ENCODE measurements at regions of chr2 and their contacts with region 1.

Region 1: DNA sequence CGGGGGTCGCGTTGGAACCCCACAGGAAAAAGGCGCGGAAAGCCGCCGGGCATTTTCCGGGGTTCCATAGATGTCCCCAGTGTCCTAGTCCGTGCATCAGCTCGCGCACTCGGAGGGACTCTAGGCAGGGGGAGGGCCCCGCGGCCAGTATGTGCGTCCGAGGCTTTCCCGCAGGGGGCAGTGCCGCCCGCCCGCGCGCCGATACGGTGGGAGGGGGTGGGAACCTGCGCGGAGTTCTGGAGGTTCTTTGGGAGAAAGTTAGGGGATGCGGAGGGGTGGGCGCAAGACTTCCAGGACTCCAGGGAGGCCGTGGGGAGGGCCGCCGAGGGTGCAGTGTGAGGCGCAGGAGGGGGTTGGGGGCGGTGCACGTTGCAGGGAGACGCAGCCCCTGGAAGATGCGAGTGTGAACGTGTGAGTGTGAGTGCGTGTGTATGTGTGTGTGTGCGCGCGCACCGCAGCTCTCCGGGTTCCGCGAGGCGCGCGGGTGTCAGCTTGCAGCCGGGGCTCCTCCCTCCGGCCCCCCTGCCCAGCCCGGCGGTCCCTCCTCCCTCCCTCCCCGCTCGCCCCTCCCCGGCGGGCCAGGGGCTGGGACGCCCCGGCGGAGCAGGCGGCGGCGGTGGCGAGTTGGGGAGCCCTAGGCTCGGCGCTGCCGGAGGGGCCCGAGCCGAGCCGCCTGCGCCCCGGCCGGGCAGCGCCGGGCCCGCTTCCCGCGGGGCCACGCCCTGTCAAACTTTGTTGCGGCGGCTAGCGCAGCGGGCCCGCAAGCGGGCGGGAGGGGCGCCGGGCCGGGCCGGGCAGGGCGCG is at the start of gene TCF7L1:
- DNase-seq: peak; percentile 95
- H3K4me3 ChIP-seq: peak within 1 kb of the TSS; percentile 59 to 95 (median 84)
- H3K27ac ChIP-seq: peak within 1 kb of the TSS; percentile 79 to 87 (median 84)
- H3K4me1 ChIP-seq: peaks cover 0 to 44% (median 35%) of the 10 kb centered on the region in 4 donors
- H3K27me3 ChIP-seq: no peaks in the 10 kb centered on the region
- CTCF ChIP-seq: peak; percentile 80 to 88 (median 86)
- EP300 ChIP-seq: no peak
- POLR2A ChIP-seq: no peak
- total RNA-seq, gene TCF7L1: 2.9 to 15.2 (median 5.1) TPM

Region 2: GRCh38 chr2:84247542-84247951 is 885.5 kb before region 1 on chr2:
- intact Hi-C with region 1: no loop called
- DNase-seq: no peak
- H3K4me3 ChIP-seq: no peak overlapping the region
- H3K27ac ChIP-seq: no peak overlapping the region
- H3K4me1 ChIP-seq: no peaks in the 10 kb centered on the region
- H3K27me3 ChIP-seq: no peaks in the 10 kb centered on the region
- CTCF ChIP-seq: no peak
- EP300 ChIP-seq: no peak
- POLR2A ChIP-seq: no peak

Region 3: DNA sequence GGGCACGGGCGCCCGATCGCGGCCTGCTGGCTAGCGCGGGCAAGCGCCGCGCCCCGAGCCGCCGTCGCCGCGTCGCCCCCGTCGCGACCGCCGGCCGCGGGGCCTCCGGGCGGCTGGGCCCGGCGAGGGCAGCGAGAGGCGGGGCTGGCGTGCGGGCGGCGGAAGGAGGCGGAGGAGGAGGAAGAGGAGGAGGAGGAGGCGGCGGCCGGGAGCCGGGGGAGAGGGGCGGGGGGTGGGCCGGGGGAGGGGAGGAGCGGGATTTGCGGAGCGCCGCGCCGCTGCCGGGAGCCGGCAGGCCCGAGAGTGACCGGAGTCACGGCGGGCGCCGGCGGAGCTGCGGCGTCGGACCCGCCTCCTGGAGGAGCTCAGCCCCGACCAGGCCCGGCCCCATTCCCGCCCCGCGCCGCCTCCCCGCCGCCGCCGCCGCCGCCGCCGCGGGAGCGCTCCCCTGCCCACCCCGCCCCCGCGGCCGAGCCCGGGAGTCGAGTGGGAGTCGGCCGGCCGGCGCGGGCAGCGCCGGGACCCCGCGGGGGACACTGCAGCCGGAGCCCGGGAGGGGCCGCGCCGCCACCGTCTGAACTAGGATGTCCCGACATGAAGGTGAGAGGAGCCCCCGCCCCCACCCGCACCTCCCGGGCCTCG is 162.0 kb before region 1 on chr2 and contains the start of gene KCMF1:
- intact Hi-C with region 1: loop called (anchors 2 kb)
- DNase-seq: peak; percentile 91
- H3K4me3 ChIP-seq: peak within 1 kb of the TSS; percentile 67 to 98 (median 77)
- H3K27ac ChIP-seq: peak within 1 kb of the TSS; percentile 96 to 97 (median 97)
- H3K4me1 ChIP-seq: peaks cover 0 to 56% (median 47%) of the 10 kb centered on the region in 4 donors
- H3K27me3 ChIP-seq: no peaks in the 10 kb centered on the region
- CTCF ChIP-seq: no peak
- EP300 ChIP-seq: no peak
- POLR2A ChIP-seq: no peak
- total RNA-seq, gene KCMF1: 35.7 to 64.5 (median 39.6) TPM

Region 4: DNA sequence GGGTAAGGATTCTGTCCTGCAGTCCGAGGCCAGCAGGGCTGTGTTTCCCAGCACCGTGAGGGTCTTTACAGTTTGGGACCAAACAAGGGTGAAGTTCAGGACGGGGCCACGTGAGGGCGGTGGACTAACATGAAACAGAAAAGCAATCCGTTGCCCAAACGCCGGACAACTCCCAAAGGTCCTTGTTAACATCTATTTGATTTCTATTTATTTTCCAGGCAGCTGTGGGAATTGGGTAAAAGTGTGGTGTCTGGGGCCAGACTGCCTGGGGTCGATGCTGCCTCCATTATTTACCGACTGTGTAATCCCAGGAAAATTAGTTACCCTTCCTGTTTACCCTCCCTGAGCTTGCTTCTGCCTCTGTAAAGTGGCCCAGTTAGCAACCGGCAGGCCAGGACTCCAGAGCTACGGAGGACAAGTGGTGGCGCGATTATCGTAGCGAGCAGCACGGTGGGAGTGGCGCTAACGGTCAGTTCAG is 66.1 kb before region 1 on chr2:
- intact Hi-C with region 1: loop called (anchors 2 kb)
- DNase-seq: peak; percentile 88
- H3K4me3 ChIP-seq: peak overlapping the region; percentile 15 to 44 (median 34)
- H3K27ac ChIP-seq: peak overlapping the region in 1 of 4 donors; percentile 31
- H3K4me1 ChIP-seq: peaks cover 0 to 13% (median 9%) of the 10 kb centered on the region in 4 donors
- H3K27me3 ChIP-seq: peaks cover 0 to 5% (median 0%) of the 10 kb centered on the region in 3 donors
- CTCF ChIP-seq: peak; percentile 53 to 86 (median 78)
- EP300 ChIP-seq: no peak
- POLR2A ChIP-seq: no peak

Region 5: GRCh38 chr2:85230679-85231467 is 97.8 kb after region 1 on chr2:
- intact Hi-C with region 1: loop called (anchors 5 kb)
- DNase-seq: no peak
- H3K4me3 ChIP-seq: no peak overlapping the region
- H3K27ac ChIP-seq: no peak overlapping the region
- H3K4me1 ChIP-seq: no peaks in the 10 kb centered on the region
- H3K27me3 ChIP-seq: no peaks in the 10 kb centered on the region
- CTCF ChIP-seq: no peak
- EP300 ChIP-seq: no peak
- POLR2A ChIP-seq: no peak

Region 6: GRCh38 chr2:85243101-85244072 is 110.4 kb after region 1 on chr2:
- intact Hi-C with region 1: loop called (anchors 2 kb)
- DNase-seq: peak; percentile 76
- H3K4me3 ChIP-seq: no peak overlapping the region
- H3K27ac ChIP-seq: no peak overlapping the region
- H3K4me1 ChIP-seq: peaks cover 0 to 38% (median 21%) of the 10 kb centered on the region in 4 donors
- H3K27me3 ChIP-seq: no peaks in the 10 kb centered on the region
- CTCF ChIP-seq: peak; percentile 27 to 60 (median 46)
- EP300 ChIP-seq: no peak
- POLR2A ChIP-seq: no peak

Region 7: DNA sequence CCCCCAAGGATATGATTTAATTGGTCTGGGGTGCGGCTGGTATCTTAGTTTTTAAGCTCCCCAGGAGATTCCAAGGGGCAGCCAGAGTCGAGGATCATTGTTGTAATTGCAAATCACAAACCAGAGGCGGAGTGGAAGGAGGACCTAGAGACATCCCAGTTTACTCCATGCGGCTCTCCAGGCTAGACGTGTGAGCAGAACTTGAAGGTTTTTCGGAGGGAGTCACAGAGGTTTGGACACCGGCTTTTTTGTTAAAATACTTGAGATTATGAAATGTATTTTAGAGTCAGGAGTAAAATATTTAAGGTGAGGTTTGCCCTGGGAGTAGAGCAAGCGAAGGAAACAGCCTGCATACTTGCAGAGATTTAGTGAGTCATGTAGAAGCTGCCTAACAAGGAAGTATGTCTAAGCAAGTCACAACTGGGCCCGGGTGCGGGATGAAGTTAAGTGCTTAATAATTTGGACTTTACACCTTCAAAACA is 155.2 kb after region 1 on chr2:
- intact Hi-C with region 1: loop called (anchors 1 kb)
- DNase-seq: no peak
- H3K4me3 ChIP-seq: no peak overlapping the region
- H3K27ac ChIP-seq: no peak overlapping the region
- H3K4me1 ChIP-seq: peaks cover 0 to 7% (median 0%) of the 10 kb centered on the region in 4 donors
- H3K27me3 ChIP-seq: no peaks in the 10 kb centered on the region
- CTCF ChIP-seq: no peak
- EP300 ChIP-seq: no peak
- POLR2A ChIP-seq: no peak

Region 8: GRCh38 chr2:85302121-85302520 is 169.1 kb after region 1 on chr2:
- intact Hi-C with region 1: loop called (anchors 5 kb)
- DNase-seq: no peak
- H3K4me3 ChIP-seq: no peak overlapping the region
- H3K27ac ChIP-seq: peak overlapping the region in 1 of 4 donors; percentile 12
- H3K4me1 ChIP-seq: peaks cover 0 to 17% (median 5%) of the 10 kb centered on the region in 4 donors
- H3K27me3 ChIP-seq: no peaks in the 10 kb centered on the region
- CTCF ChIP-seq: no peak
- EP300 ChIP-seq: no peak
- POLR2A ChIP-seq: no peak

Measured in sigmoid colon (tissue), 7 donors.